ENCODE measurements at regions of chr12 and their contacts with region 1.

Region 1: DNA sequence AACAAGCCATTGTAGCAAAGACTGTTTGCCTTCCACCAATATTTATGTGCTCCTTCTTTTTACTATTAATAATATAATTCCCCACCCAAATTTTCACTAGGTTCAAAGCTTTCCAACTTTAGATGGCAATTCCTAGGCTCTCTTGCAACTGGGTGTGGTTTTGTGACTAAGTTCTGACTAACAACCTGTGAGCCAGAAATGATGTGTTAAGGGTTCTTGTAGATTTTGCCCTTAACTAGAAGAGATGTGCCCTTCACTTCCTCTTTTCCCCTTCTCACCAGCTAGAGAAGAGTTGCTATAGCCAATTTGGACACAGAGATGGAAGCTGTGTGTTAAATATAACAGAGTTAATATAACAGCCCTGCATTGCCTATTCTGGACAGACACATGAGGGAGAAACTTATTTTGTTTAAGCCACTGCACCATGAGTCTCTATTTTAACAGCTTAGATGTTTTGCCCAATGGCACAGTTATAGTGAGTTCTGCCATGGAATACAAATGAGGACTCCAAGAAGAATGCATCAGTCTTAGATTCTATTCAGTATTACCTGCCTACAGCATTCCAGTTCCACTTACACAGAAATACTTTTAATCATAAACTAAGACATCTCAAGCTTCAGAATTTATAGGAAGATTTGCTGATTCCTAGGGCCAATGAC is 216.2 kb downstream of the DUSP6 start:
- DNase-seq: no peak
- H3K4me3 Mint-ChIP-seq: no peak overlapping the region
- H3K27ac Mint-ChIP-seq: peak overlapping the region; percentile 58
- H3K4me1 Mint-ChIP-seq: peaks cover 33% of the 10 kb centered on the region
- H3K27me3 Mint-ChIP-seq: peaks cover 2% of the 10 kb centered on the region

Region 2: DNA sequence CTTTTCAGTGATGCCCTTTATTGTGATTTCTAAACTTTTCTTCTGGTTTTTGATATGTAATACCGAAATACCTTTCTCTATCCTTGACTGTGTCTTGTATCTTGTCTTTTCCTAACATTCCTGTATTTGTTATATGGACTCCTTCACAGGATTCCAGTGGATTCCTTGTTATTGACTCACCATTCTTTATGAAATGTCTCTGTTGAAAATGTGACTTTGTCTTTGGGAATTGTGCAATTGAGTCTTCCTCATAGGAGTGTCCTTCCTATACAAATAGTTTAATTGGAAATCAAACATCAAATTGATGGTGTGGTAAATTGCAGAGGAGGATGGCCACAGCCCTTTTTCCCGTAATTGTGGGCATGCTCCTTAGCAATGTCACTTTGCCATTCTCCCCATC is 259.2 kb before region 1 on chr12:
- intact Hi-C with region 1: no loop called
- DNase-seq: no peak
- H3K4me3 Mint-ChIP-seq: no peak overlapping the region
- H3K27ac Mint-ChIP-seq: no peak overlapping the region
- H3K4me1 Mint-ChIP-seq: no peaks in the 10 kb centered on the region
- H3K27me3 Mint-ChIP-seq: no peaks in the 10 kb centered on the region

Region 3: DNA sequence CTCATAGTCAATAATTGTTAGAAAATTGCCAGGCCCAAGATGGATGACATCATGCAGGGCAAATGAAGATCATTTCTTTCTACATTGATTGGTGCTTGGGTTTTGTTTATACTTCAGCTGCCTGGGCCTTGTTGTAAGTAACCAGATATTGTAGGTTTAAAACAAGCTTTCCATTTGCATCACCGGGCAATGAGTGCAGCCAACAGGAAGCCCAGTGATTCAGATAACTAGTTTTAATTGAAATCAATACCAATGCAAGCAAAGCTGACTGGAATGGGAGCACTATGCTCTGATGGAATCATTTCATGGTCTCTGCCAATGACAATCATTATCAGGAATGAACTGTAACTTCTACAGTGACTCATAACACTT is 63.1 kb before region 1 on chr12:
- intact Hi-C with region 1: loop called (anchors 2 kb)
- DNase-seq: no peak
- H3K4me3 Mint-ChIP-seq: no peak overlapping the region
- H3K27ac Mint-ChIP-seq: peak overlapping the region; percentile 5
- H3K4me1 Mint-ChIP-seq: peaks cover 31% of the 10 kb centered on the region
- H3K27me3 Mint-ChIP-seq: no peaks in the 10 kb centered on the region

Region 4: GRCh38 chr12:89111964-89112363 is 24.1 kb before region 1 on chr12:
- intact Hi-C with region 1: loop called (anchors 2 kb)
- DNase-seq: no peak
- H3K4me3 Mint-ChIP-seq: no peak overlapping the region
- H3K27ac Mint-ChIP-seq: no peak overlapping the region
- H3K4me1 Mint-ChIP-seq: no peaks in the 10 kb centered on the region
- H3K27me3 Mint-ChIP-seq: no peaks in the 10 kb centered on the region

Region 5: DNA sequence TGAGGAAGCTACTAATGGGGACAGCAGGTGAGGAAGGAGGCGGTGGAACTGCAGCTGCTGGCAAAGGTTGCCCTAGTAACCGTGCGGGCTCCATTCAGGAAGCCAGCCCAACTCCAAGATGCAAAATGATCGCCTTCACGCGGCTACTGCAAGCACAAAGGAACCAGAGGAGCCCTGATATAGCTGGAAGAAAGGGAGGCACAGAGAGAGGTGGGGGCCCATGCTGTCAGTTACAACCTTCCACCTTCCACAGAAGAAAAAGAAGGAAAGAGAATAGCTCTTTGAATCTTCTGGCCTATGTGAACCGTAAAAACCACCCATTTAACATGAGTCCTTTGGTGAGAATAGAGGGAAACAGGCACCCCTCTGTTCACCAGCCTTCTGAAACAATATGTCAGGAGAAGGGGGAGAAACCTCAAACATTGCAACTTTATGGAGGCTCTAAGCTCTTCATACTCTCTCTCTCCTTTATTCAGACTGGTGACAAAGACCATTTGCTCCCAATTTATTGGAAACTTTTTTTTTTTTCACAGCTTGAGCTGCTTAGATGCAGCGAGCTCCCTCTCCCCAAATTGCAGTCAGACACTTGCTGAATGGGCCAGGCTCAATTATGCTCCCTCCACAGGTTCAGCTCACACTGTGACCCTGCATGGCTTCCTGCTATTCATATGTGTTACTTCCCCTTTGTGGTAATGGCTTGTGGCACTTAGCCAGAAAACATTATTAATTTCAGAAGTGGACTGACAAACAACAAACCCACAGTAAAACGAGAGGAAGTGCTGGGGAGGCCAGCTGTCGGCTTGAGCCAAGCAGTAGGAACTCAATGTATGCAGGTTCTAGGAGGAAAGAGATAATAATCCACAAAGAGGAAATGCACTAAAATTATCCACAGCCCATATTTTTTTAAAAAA is 210.0 kb after region 1 on chr12:
- intact Hi-C with region 1: loop called (anchors 1 kb)
- DNase-seq: peak; percentile 53
- H3K4me3 Mint-ChIP-seq: peak overlapping the region; percentile 80
- H3K27ac Mint-ChIP-seq: peak overlapping the region; percentile 88
- H3K4me1 Mint-ChIP-seq: peaks cover 70% of the 10 kb centered on the region
- H3K27me3 Mint-ChIP-seq: no peaks in the 10 kb centered on the region

Measured in activated T-helper 1 cell treated with anti-CD3 and anti-CD28 coated beads, Interleukin-12 subunit alpha, Interleukin-12 subunit beta, Interleukin-2, Interleukin-4 antibody, amounts not matched to agents 30 ng/mL and 10 ng/mL and 1 ng/mL, durations not matched to agents 14 hours and 24 hours and 36 hours (primary cell).